Common myeloid progenitor, CD34-positive (primary cell): ENCODE measurements at regions of chr1 and their contacts with region 1.

Region 1: DNA sequence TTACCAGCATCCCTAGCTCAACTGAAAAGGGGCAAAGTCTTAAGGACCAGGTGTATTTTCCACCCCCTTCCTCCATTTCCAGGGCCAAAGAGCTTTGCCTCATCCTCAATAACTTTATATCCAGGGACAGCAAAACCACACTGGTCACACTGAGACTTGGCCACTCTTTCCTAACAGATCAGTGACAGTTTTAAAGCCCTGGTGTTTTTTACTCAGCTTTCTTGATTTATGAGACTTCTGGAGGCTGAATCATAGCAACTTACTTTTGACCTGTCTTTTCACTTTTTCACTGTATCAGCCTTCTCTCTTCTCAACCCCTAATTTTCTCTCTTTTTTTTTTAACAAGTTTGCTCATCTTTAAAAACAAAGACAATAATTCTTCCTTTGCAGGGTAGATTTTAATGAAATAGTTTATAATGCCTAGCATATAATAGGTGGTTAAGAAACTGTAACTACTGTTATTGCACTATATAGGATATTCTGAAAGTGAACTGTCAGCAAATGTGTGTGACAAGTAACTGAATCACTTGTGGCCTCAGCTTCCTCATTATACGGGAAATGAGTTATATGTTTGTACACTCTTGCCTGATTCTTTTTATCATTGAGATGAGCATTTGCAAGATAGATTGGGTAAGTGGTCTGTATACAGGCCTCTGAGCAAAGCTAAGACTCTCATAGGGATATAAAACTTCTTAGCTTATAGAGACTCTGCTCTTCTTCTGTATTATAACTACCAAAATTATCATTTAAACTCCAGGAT is 19.7 kb upstream of the DYNLT5 start:
- DNase-seq: peak; percentile 51 to 93 (median 83)
- H3K4me3 ChIP-seq: peak overlapping the region in 2 of 7 experiments; percentile 7 to 8
- H3K27ac ChIP-seq: peak overlapping the region; percentile 81 to 88
- H3K4me1 ChIP-seq: peaks cover 27 to 63% (median 50%) of the 10 kb centered on the region in 4 experiments
- H3K27me3 ChIP-seq: no peaks in the 10 kb centered on the region

Region 2: GRCh38 chr1:66752000-66752592 is 19.5 kb after region 1 on chr1 and contains the start of gene DYNLT5:
- CTCF ChIA-PET with region 1: interaction called, 51 read pairs
- POLR2A ChIA-PET with region 1: interaction called, 4 read pairs
- DNase-seq: peak in 2 of 3 donors; percentile 58 to 59
- H3K4me3 ChIP-seq: peak within 1 kb of the TSS; percentile 52 to 92 (median 76)
- H3K27ac ChIP-seq: peak within 1 kb of the TSS; percentile 77 to 90
- H3K4me1 ChIP-seq: peaks cover 24 to 69% (median 43%) of the 10 kb centered on the region in 4 experiments
- H3K27me3 ChIP-seq: no peaks in the 10 kb centered on the region

Region 3: DNA sequence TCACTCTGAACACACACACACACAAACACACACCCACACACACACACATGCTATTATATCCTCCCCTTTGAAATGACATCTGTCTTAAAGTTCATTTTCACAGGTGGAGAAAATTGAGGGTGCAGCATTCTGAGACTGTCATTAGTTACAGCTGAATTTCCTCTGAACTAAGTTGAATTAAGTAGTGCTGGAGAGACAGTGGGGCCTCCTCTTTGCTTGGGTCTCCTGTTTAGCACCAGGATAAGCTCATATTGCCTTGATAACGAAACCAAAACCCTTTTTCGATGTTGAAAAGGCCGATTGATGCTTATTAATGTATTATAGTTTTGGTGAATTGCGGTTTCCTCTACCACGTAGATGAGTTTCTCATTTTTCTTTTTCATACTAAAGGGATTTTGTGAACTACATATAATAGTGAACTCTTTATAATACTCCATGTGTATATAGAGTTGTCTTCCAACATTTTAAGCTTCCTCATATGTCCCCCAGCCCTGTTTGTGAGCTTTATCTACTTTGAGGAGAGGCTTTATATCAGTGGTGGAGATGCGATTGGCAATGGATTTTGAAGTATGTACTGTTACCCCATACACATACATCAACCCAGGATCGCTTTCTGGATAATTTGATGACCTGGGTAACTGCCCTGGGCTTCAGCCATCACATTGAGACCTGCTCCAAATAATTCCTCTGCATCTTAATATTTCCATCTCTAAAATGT is 37.1 kb after region 1 on chr1:
- CTCF ChIA-PET with region 1: no interaction called
- POLR2A ChIA-PET with region 1: no interaction called
- DNase-seq: peak in 2 of 3 donors; percentile 35 to 53
- H3K4me3 ChIP-seq: no peak overlapping the region
- H3K27ac ChIP-seq: no peak overlapping the region
- H3K4me1 ChIP-seq: peaks cover 0 to 6% (median 0%) of the 10 kb centered on the region in 4 experiments
- H3K27me3 ChIP-seq: no peaks in the 10 kb centered on the region